GM10248 (cell line): ENCODE measurements at regions of chr2 and their contacts with region 1.

Region 1: DNA sequence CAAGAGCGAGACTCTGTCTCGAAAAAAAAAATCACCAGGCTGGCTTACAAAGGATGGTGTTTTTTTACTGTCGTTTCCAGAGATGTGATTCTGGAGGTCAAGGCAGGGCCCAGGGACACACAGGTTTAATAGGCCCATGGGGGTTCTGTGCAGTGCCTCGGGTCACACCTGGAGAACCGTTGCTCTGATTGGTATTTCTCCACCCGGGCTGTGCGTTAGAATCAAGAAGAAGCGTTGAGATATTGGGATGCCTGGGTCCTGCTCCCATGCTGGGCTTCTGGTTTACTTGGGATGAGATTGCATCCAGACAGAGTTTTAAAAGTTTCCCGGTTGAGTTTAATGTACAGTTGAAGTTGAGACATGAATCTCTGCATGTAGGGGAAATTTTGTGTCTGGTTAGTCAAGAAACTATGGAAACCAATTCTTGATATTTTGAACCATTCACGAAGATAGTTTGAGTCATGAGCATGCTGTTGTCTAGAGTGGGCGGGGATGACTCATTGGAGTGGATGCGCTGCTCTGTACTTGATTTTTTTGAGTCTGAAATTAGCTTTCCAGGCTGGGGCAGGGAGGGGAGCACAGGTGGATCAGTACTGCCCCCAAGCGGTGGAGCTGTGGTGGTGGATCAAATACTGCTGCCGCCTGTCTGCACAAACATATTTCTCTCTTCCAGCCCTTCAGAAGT is 50.1 kb downstream of the GREB1 start:
- DNase-seq: peak; percentile 87
- CTCF ChIP-seq: peak; percentile 80

Region 2: DNA sequence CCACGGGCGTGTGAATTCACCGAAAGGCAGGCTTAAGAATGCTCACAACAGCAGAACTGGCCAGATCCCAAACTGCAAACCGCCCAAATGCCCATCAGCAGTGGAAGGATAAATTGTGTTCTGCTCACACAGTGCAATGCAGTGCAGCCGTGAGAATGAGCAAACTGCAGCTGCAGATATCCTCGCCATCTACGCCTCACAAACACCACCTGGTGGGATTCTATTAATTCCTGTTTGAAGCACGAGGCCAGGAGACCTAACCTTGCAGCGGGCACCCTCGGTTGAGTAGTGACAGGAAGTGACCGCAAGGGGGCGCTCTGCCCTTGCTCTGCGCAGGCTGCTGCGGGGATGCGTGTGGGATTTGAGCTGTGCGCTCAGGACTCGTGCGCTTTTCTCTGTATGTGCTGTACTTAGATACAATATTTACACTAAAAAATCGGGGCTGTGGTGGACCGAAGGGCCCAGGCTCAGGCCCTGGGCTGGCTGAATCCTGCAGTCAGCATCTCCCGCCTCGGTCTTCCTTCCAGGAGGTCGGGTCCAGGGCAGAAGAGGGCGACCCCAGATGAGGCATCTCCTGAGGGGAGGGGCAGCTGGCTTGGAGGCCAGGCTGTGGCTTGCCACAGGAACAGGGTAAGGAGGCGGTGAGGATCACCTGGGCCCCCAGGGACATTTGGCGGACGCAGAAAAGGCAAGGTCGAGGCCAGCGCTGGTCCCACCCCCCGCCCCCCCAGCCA is 751.6 kb before region 1 on chr2:
- CTCF ChIA-PET with region 1: interaction called, 22 read pairs
- POLR2A ChIA-PET with region 1: no interaction called
- DNase-seq: peak; percentile 89
- CTCF ChIP-seq: peak; percentile 93

Region 3: GRCh38 chr2:11145350-11145749 is 438.6 kb before region 1 on chr2:
- CTCF ChIA-PET with region 1: interaction called, 29 read pairs
- POLR2A ChIA-PET with region 1: no interaction called
- DNase-seq: no peak
- CTCF ChIP-seq: no peak

Region 4: DNA sequence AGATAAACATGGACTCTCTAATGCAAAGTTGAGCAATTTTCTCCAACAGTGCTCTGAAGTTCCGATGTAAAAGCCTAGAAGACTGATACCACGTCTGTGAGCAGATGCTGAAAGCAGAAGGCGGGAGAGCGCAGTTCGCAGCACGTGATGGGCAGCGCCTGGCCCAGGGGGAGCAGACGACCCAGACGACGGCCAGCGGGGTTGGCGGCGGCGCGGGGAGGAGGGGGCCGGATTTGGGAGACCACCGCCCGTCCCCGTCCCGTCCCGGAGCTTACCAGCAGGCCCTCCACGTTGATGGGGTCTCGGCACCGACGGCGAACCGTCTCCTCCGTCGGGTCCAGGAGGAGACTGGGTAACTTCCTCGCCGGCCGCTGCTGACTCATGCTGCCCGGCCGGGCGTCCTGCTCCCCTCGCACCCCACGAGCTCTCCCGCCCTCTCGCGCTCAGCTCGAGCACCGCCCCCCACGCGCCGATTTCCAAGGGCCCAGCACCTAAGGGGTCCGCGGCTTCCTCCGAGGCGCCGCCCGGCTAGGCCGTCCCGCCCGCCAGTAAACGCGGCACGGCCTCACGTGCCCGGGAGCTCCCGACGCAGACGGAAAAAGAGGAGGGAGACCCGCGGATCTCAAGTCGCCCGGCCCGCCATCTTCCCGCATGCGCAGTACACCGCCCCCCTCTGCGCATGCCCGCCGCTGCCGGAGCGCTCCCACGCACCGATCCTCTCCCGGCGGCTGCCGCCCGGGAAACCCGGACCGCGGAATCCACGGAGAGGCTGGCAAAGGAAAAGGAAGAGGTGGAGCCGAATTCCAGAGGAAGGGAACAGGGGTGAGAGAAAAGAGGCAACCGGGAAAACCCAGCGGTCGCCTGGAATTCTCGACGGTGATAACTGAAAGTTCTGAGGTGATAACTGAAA is 118.2 kb before region 1 on chr2 and contains the start of gene E2F6:
- CTCF ChIA-PET with region 1: interaction called, 50 read pairs
- POLR2A ChIA-PET with region 1: no interaction called
- DNase-seq: peak; percentile 90
- CTCF ChIP-seq: no peak

Region 5: DNA sequence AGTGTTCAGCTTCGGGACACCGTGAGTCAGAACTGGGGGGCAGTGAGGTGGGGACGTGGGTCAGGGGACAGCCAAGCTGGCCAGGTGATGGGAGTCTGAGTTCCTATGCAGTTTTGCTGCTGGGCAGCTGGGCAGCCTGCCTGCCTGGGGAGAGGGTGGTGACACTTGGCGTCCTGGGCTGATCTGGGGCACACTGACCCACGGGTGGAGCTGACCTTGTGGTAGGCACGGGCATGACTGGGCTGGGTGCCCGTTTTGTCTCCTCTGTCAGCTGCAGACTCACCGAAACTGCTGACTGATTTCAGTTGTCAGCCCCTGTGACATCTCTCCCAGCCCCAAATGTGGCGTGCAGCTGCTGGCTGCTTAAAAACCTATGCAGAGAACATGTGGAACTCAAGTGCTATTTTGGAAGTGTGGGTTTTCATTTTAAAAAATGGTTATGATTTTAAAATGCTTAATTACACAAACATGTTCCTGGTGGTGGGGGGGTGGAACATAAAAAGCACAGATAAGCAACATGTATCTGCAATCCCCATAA is 85.4 kb before region 1 on chr2:
- CTCF ChIA-PET with region 1: interaction called, 11 read pairs
- POLR2A ChIA-PET with region 1: no interaction called
- DNase-seq: peak; percentile 59
- CTCF ChIP-seq: no peak

Region 6: DNA sequence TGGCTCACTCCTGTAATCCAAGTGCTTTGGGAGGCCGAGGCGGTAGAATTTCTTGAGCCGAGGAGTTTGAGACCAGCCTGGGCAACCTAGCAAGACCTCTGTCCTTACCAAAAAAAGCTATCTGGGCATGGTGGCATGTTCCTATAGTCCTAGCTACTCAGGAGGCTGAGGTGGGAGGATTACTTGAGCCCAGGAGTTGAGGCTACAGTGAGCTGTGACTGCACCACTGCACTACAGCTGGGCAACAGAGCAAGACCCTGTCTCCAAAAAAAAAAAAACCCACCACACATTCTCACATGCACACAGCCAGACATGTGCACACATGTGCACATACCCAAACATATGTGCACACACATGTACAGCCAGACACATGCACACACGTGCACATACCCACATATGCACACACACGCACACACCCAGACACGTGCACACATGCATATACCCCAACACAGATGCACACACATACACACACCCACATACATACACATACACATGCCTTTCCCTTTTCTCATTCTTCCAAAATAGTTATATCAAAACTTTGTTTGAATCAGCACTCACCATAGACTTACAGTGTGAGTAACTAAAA is 36.0 kb before region 1 on chr2:
- CTCF ChIA-PET with region 1: interaction called, 12 read pairs
- POLR2A ChIA-PET with region 1: no interaction called
- DNase-seq: no peak
- CTCF ChIP-seq: no peak

Region 7: GRCh38 chr2:11573418-11574175 is 10.4 kb before region 1 on chr2:
- CTCF ChIA-PET with region 1: interaction called, 16 read pairs
- POLR2A ChIA-PET with region 1: no interaction called
- DNase-seq: no peak
- CTCF ChIP-seq: no peak